ENCODE measurements at regions of chrX and their contacts with region 1.

Region 1: GRCh38 chrX:155026726-155027508 is at the start of gene FUNDC2:
- DNase-seq: peak; percentile 92
- H3K4me3 Mint-ChIP-seq: peak within 1 kb of the TSS; percentile 89
- H3K27ac Mint-ChIP-seq: peak within 1 kb of the TSS; percentile 93
- H3K4me1 Mint-ChIP-seq: peaks cover 21% of the 10 kb centered on the region
- H3K27me3 Mint-ChIP-seq: peaks cover 4% of the 10 kb centered on the region
- total RNA-seq, gene FUNDC2: 74.1 and 79.1 TPM in 2 replicates

Region 2: GRCh38 chrX:154097597-154098541 is 929.0 kb before region 1 on chrX and contains the start of gene MECP2:
- intact Hi-C with region 1: loop called (anchors 5 kb)
- DNase-seq: peak; percentile 84
- H3K4me3 Mint-ChIP-seq: peak within 1 kb of the TSS; percentile 97
- H3K27ac Mint-ChIP-seq: peak within 1 kb of the TSS; percentile 99
- H3K4me1 Mint-ChIP-seq: peaks cover 54% of the 10 kb centered on the region
- H3K27me3 Mint-ChIP-seq: no peaks in the 10 kb centered on the region
- total RNA-seq, gene MECP2: 53.4 and 59.4 TPM in 2 replicates

Region 3: DNA sequence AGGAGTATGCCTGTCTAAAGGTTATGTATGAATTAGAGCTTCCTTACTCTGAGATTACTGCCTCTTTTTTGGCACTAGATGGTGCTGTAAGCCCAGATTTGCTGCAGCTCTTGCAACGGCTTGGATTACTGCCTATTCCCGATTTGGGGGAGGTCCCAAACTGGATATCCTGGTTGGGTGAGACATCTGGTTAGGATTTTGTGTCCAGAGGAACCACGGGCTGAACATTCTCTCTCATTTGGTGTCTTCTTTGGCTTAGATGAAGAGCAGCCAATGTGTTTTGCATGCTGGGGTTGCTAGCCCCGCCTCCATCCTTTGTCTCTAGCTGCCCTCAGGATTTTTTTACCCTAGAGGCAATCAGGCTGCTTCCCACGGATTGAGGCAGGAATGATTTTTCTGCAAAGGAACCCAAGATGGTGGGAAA is 108.8 kb before region 1 on chrX:
- intact Hi-C with region 1: loop called (anchors 2 kb)
- DNase-seq: peak; percentile 1
- H3K4me3 Mint-ChIP-seq: peak overlapping the region; percentile 68
- H3K27ac Mint-ChIP-seq: no peak overlapping the region
- H3K4me1 Mint-ChIP-seq: peaks cover 6% of the 10 kb centered on the region
- H3K27me3 Mint-ChIP-seq: peaks cover 15% of the 10 kb centered on the region

Region 4: GRCh38 chrX:155056877-155057792 is 30.2 kb after region 1 on chrX:
- intact Hi-C with region 1: loop called (anchors 1 kb)
- DNase-seq: peak; percentile 22
- H3K4me3 Mint-ChIP-seq: peak overlapping the region; percentile 62
- H3K27ac Mint-ChIP-seq: no peak overlapping the region
- H3K4me1 Mint-ChIP-seq: peaks cover 35% of the 10 kb centered on the region
- H3K27me3 Mint-ChIP-seq: no peaks in the 10 kb centered on the region

Region 5: DNA sequence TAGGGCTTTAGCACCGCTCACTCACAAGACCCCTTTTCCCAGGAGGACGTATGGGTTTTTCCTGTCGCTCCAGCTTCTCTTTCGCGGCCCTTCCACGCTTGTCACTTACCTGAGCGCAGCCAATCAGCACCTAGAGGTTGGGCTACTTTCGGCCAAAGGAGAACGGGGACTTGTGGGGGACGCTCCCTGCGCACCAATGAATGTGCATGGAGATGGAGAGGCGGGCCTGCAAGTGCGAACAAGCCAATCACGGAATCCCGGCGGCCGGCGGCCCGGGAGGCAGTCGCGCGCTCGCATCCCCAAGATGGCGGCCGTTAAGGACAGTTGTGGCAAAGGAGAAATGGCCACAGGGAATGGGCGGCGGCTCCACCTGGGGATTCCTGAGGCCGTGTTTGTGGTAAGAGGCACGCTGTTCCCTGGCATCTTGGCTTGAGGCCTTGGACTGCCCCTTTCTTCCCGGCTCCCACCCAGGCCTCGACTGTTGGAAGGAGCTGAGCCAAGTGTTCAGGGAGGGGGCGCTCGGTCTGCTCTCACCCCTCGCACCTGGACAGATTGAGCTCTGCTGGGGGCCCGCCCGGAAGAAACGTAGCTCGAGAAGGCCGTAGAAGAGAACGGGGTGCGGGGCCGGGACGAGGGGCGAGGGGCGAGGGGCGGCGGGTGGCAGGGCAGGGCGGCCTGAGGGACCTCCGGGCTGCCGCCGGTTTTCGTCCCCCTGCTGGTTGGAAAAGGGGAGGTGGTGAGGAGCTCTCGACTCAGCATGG is 189.4 kb after region 1 on chrX and contains the start of gene VBP1:
- intact Hi-C with region 1: loop called (anchors 1 kb)
- DNase-seq: peak; percentile 84
- H3K4me3 Mint-ChIP-seq: peak within 1 kb of the TSS; percentile 96
- H3K27ac Mint-ChIP-seq: peak within 1 kb of the TSS; percentile 93
- H3K4me1 Mint-ChIP-seq: peaks cover 20% of the 10 kb centered on the region
- H3K27me3 Mint-ChIP-seq: no peaks in the 10 kb centered on the region
- total RNA-seq, gene VBP1: 73.0 and 74.6 TPM in 2 replicates

Region 6: DNA sequence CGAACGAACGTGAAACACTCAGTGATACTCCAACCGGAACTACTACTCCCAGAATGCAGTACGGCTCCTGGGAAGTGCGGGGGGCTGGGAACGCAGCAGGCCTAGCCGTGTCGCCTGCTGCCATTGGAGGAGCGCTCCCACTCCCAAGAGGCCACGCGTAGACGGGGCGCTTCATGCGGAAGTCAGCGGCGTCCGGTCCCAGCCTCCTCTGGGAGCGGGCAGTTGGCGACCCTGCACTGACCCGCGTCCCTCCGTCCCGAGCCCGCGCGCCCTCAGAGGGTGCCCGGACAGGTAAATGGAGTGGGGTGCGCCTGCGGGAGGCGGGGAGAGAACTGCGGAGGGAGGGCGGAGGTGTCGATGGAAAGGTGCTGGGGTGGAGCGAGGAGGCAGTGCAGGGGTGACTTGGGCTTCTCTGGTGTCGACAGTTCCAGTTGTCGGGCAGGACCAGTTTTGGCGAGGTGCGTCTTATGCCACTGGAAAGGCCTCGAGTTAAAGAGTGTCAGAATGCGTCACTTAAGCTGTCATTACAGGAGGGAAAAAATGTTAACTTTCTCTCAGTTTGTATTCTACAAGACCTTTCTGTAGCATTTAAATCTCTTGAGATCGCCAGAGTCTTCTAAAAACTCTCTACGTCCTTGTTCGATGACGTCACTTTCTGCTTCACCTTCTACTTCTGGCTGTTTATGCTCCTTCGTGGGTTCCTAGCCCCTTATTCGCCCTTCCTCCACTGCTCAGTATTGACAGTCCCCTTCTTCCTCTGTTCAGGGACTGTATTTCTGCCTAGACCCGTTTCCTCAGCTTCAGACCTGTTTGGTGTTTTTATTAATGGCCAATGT is 854.5 kb after region 1 on chrX and contains the start of gene VAMP7:
- intact Hi-C with region 1: loop called (anchors 5 kb)
- DNase-seq: peak; percentile 74
- H3K4me3 Mint-ChIP-seq: peak within 1 kb of the TSS; percentile 92
- H3K27ac Mint-ChIP-seq: peak within 1 kb of the TSS; percentile 87
- H3K4me1 Mint-ChIP-seq: peaks cover 20% of the 10 kb centered on the region
- H3K27me3 Mint-ChIP-seq: no peaks in the 10 kb centered on the region
- total RNA-seq, gene VAMP7: 27.4 and 32.8 TPM in 2 replicates